T-cell (primary cell): ENCODE measurements at regions of chr3 and their contacts with region 1.

Region 1: GRCh38 chr3:160565442-160566403 is at the start of gene KPNA4:
- DNase-seq: peak; percentile 92 to 98 (median 96)
- ATAC-seq: peak; percentile 89 to 94 (median 91)
- H3K4me3 ChIP-seq: peak within 1 kb of the TSS; percentile 71 to 80
- H3K4me3 Mint-ChIP-seq: peak within 1 kb of the TSS; percentile 89 to 95 (median 94)
- H3K27ac ChIP-seq: peak within 1 kb of the TSS; percentile 82
- H3K27ac Mint-ChIP-seq: peak within 1 kb of the TSS; percentile 90 to 97
- H3K4me1 ChIP-seq: peaks cover 17 to 35% of the 10 kb centered on the region in 2 experiments
- H3K4me1 Mint-ChIP-seq: peaks cover 53% of the 10 kb centered on the region in 3 donors
- H3K27me3 ChIP-seq: no peaks in the 10 kb centered on the region
- H3K27me3 Mint-ChIP-seq: no peaks in the 10 kb centered on the region
- total RNA-seq, gene KPNA4: 31.9 to 53.7 (median 43.4) TPM

Region 2: GRCh38 chr3:160616716-160617115 is 51.0 kb after region 1 on chr3:
- CTCF ChIA-PET with region 1: interaction called in 1 of 2 experiments, 3 read pairs
- POLR2A ChIA-PET with region 1: interaction called in 1 of 2 experiments, 13 read pairs
- DNase-seq: no peak
- ATAC-seq: no peak
- H3K4me3 ChIP-seq: no peak overlapping the region
- H3K4me3 Mint-ChIP-seq: no peak overlapping the region
- H3K27ac ChIP-seq: no peak overlapping the region
- H3K27ac Mint-ChIP-seq: no peak overlapping the region
- H3K4me1 ChIP-seq: no peaks in the 10 kb centered on the region
- H3K4me1 Mint-ChIP-seq: no peaks in the 10 kb centered on the region
- H3K27me3 ChIP-seq: peaks cover 0 to 3% of the 10 kb centered on the region in 2 experiments
- H3K27me3 Mint-ChIP-seq: peaks cover 28 to 29% of the 10 kb centered on the region in 2 donors

Region 3: DNA sequence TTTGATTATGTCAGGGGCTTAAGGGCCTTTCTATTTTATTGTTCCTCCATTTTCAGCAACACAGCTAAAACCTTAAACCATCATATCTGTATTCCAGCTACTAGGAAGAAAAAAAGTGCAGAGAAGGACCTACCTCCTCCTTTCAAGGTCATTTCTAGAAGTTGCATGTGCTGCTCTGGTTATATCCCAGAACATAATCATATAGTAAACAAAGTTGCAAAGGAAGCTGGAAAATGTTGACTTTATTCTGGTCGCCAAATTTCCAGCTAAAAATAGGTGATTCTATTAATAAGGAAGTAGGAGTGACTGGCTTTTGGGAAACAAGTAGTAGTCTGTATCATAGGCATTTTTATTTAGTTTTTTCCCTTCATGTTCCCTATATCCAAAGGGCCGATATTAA is 560.8 kb after region 1 on chr3:
- CTCF ChIA-PET with region 1: no interaction called
- POLR2A ChIA-PET with region 1: no interaction called
- DNase-seq: no peak
- ATAC-seq: no peak
- H3K4me3 ChIP-seq: no peak overlapping the region
- H3K4me3 Mint-ChIP-seq: no peak overlapping the region
- H3K27ac ChIP-seq: no peak overlapping the region
- H3K27ac Mint-ChIP-seq: no peak overlapping the region
- H3K4me1 ChIP-seq: no peaks in the 10 kb centered on the region
- H3K4me1 Mint-ChIP-seq: no peaks in the 10 kb centered on the region
- H3K27me3 ChIP-seq: no peaks in the 10 kb centered on the region
- H3K27me3 Mint-ChIP-seq: peaks cover 3 to 7% of the 10 kb centered on the region in 2 donors

Region 4: GRCh38 chr3:161231861-161232260 is 666.1 kb after region 1 on chr3:
- CTCF ChIA-PET with region 1: no interaction called
- POLR2A ChIA-PET with region 1: interaction called in 1 of 2 experiments, 10 read pairs
- DNase-seq: no peak
- ATAC-seq: no peak
- H3K4me3 ChIP-seq: no peak overlapping the region
- H3K4me3 Mint-ChIP-seq: no peak overlapping the region
- H3K27ac ChIP-seq: no peak overlapping the region
- H3K27ac Mint-ChIP-seq: no peak overlapping the region
- H3K4me1 ChIP-seq: no peaks in the 10 kb centered on the region
- H3K4me1 Mint-ChIP-seq: peaks cover 0 to 22% (median 14%) of the 10 kb centered on the region in 3 donors
- H3K27me3 ChIP-seq: no peaks in the 10 kb centered on the region
- H3K27me3 Mint-ChIP-seq: no peaks in the 10 kb centered on the region

Region 5: DNA sequence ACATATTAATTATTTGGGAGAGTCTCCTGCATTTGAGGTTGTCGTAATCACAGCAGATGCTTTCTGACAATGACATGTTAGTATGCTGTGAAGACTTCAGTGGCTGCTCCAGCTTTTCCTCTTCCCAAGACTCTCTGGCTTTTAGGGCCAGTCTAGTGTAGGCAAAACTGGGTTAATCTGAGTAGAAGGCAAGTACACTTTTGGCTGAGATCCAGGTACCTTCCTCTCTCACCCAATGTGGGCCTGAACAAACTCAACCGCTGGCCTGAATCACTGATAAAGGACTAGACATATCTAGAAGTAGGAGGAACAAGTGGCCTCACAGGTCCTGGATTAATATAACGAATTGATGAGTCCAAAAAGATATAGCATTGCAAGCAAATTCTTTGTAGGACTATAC is 801.9 kb after region 1 on chr3:
- CTCF ChIA-PET with region 1: interaction called in 1 of 2 experiments, 10 read pairs
- POLR2A ChIA-PET with region 1: no interaction called
- DNase-seq: no peak
- ATAC-seq: no peak
- H3K4me3 ChIP-seq: no peak overlapping the region
- H3K4me3 Mint-ChIP-seq: no peak overlapping the region
- H3K27ac ChIP-seq: no peak overlapping the region
- H3K27ac Mint-ChIP-seq: no peak overlapping the region
- H3K4me1 ChIP-seq: peaks cover 3 to 14% of the 10 kb centered on the region in 2 experiments
- H3K4me1 Mint-ChIP-seq: peaks cover 11 to 13% (median 12%) of the 10 kb centered on the region in 3 donors
- H3K27me3 ChIP-seq: peaks cover 0 to 14% of the 10 kb centered on the region in 2 experiments
- H3K27me3 Mint-ChIP-seq: peaks cover 8 to 17% of the 10 kb centered on the region in 2 donors